Mucosa of descending colon (tissue), 3 donors: ENCODE measurements at regions of chr13 and their contacts with region 1.

Region 1: GRCh38 chr13:96817336-96817941 is 176.8 kb downstream of the OXGR1 start:
- DNase-seq: peak in 1 of 3 donors; percentile 16
- ATAC-seq: no peak
- H3K4me3 ChIP-seq: no peak overlapping the region
- H3K4me1 ChIP-seq: no peaks in the 10 kb centered on the region
- CTCF ChIP-seq: no peak

Region 2: GRCh38 chr13:96011291-96011872 is 806.1 kb before region 1 on chr13:
- intact Hi-C with region 1: loop called in 1 of 2 experiments (anchors 10 kb)
- DNase-seq: no peak
- ATAC-seq: no peak
- H3K4me3 ChIP-seq: no peak overlapping the region
- H3K4me1 ChIP-seq: no peaks in the 10 kb centered on the region
- CTCF ChIP-seq: no peak